CD4-positive, alpha-beta memory T cell (primary cell): ENCODE measurements at regions of chr12 and their contacts with region 1.

Region 1: DNA sequence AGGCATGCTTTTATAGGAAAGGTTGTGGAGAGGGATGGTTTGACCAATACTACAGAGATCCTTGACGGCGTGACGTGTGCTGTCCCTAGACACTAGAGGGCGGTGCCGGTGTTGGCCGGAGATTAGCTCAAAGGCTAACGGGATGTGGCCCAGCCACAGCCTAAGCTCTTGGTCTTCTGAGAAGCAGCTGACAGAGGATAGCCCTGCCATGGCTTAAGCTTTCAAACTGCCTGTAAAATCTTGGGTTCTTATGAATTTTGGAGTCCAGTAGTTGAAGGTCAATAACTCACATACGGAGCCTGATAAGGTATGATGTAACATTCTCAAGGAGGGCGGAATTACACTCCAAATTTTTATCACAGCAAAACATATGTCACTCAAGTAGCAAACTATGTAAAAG is 515.7 kb upstream of the ATXN7L3B start:
- DNase-seq: no peak
- H3K4me3 ChIP-seq: no peak overlapping the region
- H3K4me3 Mint-ChIP-seq: no peak overlapping the region
- H3K27ac ChIP-seq: no peak overlapping the region
- H3K27ac Mint-ChIP-seq: no peak overlapping the region
- H3K4me1 ChIP-seq: no peaks in the 10 kb centered on the region
- H3K4me1 Mint-ChIP-seq: peaks cover 0 to 2% (median 0%) of the 10 kb centered on the region in 4 donors
- H3K27me3 ChIP-seq: no peaks in the 10 kb centered on the region
- H3K27me3 Mint-ChIP-seq: no peaks in the 10 kb centered on the region

Region 2: DNA sequence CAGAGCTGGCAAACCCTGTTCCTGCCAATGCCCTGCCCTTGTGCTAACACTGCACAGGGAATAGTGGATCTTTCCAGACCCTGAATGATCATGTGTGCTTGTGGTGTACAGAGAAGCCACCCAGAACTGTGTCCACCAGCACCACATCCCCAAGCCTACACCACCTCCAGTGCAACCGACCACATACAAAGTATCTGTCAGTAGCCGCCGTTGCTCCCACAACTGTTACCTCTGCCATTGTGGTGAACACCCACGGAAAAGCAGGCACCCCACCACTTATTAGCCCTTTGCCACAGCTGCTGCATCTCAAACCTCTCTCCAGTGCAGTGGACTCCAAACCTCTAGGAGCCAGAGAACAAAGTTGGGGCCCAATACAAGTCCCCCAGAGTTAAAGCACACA is 700.2 kb before region 1 on chr12:
- CTCF ChIA-PET with region 1: no interaction called
- POLR2A ChIA-PET with region 1: no interaction called
- intact Hi-C with region 1: loop called (anchors 5 kb)
- DNase-seq: peak in 1 of 5 donors; percentile 19
- H3K4me3 ChIP-seq: no peak overlapping the region
- H3K4me3 Mint-ChIP-seq: no peak overlapping the region
- H3K27ac ChIP-seq: no peak overlapping the region
- H3K27ac Mint-ChIP-seq: no peak overlapping the region
- H3K4me1 ChIP-seq: no peaks in the 10 kb centered on the region
- H3K4me1 Mint-ChIP-seq: no peaks in the 10 kb centered on the region
- H3K27me3 ChIP-seq: no peaks in the 10 kb centered on the region
- H3K27me3 Mint-ChIP-seq: no peaks in the 10 kb centered on the region

Region 3: GRCh38 chr12:74537707-74538385 is 515.9 kb after region 1 on chr12 and contains the start of gene ATXN7L3B:
- CTCF ChIA-PET with region 1: no interaction called
- POLR2A ChIA-PET with region 1: no interaction called
- intact Hi-C with region 1: loop called (anchors 2 kb)
- DNase-seq: peak; percentile 95 to 97 (median 97)
- H3K4me3 ChIP-seq: peak within 1 kb of the TSS; percentile 92 to 99
- H3K4me3 Mint-ChIP-seq: peak within 1 kb of the TSS; percentile 81 to 99 (median 96)
- H3K27ac ChIP-seq: peak within 1 kb of the TSS; percentile 95
- H3K27ac Mint-ChIP-seq: peak within 1 kb of the TSS; percentile 97 to 100 (median 99)
- H3K4me1 ChIP-seq: peaks cover 48% of the 10 kb centered on the region
- H3K4me1 Mint-ChIP-seq: peaks cover 39 to 60% (median 49%) of the 10 kb centered on the region in 4 donors
- H3K27me3 ChIP-seq: no peaks in the 10 kb centered on the region
- H3K27me3 Mint-ChIP-seq: no peaks in the 10 kb centered on the region
- total RNA-seq, gene ATXN7L3B: 45.1 to 46.2 TPM